OCI-LY7 (cell line): ENCODE measurements at regions of chr2 and their contacts with region 1.

Region 1: GRCh38 chr2:181677912-181678586 is 2.3 kb downstream of the NEUROD1 start:
- DNase-seq: no peak
- H3K4me3 ChIP-seq: no peak overlapping the region
- H3K27ac ChIP-seq: no peak overlapping the region
- H3K4me1 ChIP-seq: peaks cover 1% of the 10 kb centered on the region
- CTCF ChIP-seq: no peak

Region 2: DNA sequence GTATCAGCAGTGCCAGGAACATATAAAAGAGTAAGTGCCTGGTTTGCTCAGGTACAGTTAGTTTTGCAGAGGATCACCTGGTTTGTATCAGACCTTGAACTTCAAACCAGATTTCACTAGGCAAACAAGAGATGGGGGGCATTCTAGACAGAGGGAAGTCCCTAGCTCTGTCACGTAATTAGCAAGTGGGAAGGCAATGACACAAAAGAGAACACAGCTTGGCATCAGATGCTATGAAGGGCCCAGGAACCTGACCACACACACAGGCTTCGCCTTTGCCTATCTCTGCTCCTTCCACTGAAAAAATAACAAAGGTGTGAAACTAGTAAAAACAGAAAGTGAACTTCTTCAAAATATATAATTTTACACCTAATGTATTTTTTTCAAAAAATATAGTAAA is 83.7 kb before region 1 on chr2:
- CTCF ChIA-PET with region 1: no interaction called
- POLR2A ChIA-PET with region 1: no interaction called
- intact Hi-C with region 1: no loop called
- DNase-seq: no peak
- H3K4me3 ChIP-seq: no peak overlapping the region
- H3K27ac ChIP-seq: no peak overlapping the region
- H3K4me1 ChIP-seq: no peaks in the 10 kb centered on the region
- CTCF ChIP-seq: no peak

Region 3: DNA sequence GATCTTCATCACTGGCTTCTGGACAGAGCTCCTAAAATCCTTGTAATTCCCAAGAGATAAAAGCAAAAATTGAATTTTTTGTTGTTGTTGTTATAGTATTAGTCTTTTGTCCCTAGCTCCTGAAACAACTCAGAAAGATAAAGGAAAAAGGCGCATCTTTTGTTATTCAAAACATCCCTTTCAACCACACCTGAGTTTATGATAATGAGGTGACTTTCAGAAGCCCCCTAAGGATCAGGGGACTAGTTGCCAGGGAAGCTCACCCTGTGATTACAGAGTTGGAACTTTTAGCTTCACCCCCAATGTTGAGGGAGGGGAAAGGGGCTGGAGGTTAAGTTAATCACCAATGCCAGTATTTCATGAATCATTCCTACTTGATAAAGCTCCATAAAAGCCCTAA is 10.8 kb before region 1 on chr2:
- CTCF ChIA-PET with region 1: no interaction called
- POLR2A ChIA-PET with region 1: interaction called, 13 read pairs
- intact Hi-C with region 1: no loop called
- DNase-seq: no peak
- H3K4me3 ChIP-seq: no peak overlapping the region
- H3K27ac ChIP-seq: no peak overlapping the region
- H3K4me1 ChIP-seq: no peaks in the 10 kb centered on the region
- CTCF ChIP-seq: no peak